ENCODE measurements at regions of chrX and their contacts with region 1.

Region 1: GRCh38 chrX:130770615-130771014 is 132.4 kb downstream of the ENOX2 start:
- DNase-seq: peak; percentile 61
- H3K4me3 ChIP-seq: no peak overlapping the region
- H3K27ac ChIP-seq: peak overlapping the region; percentile 41
- H3K4me1 ChIP-seq: peaks cover 11% of the 10 kb centered on the region
- H3K27me3 ChIP-seq: no peaks in the 10 kb centered on the region
- CTCF ChIP-seq: no peak
- POLR2A ChIP-seq: no peak

Region 2: DNA sequence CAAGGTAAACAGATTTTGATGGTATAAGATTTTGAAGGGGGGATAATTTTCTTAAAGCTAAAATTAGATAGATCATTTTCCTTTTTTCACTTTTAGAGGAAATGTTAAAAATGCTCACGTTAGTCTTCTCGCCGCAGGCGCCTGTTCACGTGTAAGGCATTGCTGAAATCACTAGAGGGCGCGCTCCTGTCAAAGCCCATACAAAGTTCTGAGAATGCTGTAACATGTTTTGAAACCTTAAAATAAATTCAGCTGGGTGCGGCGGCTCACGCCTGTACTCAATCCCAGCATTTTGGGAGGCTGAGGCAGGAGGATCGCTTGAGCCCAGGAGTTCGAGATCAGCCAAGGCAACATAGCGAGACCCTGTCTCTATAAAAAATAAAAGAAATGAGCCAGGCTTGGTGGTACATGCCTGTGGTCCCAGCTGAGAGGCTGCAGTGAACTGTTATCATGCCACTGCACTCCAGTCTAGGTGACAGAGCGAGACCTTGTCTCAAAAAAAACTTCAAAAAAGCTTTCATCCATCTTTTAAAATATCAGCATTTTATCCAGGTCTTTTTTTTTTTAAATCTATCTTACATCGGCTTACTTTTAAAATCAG is 230.8 kb before region 1 on chrX:
- CTCF ChIA-PET with region 1: no interaction called
- POLR2A ChIA-PET with region 1: no interaction called
- dilution Hi-C with region 1: no loop called
- intact Hi-C with region 1: no loop called
- DNase-seq: peak; percentile 31
- H3K4me3 ChIP-seq: no peak overlapping the region
- H3K27ac ChIP-seq: no peak overlapping the region
- H3K4me1 ChIP-seq: no peaks in the 10 kb centered on the region
- H3K27me3 ChIP-seq: no peaks in the 10 kb centered on the region
- CTCF ChIP-seq: peak; percentile 47 to 68
- POLR2A ChIP-seq: no peak

Region 3: GRCh38 chrX:130680164-130681035 is 90.2 kb before region 1 on chrX:
- CTCF ChIA-PET with region 1: no interaction called
- POLR2A ChIA-PET with region 1: no interaction called
- dilution Hi-C with region 1: no loop called
- intact Hi-C with region 1: no loop called
- DNase-seq: peak; percentile 13
- H3K4me3 ChIP-seq: no peak overlapping the region
- H3K27ac ChIP-seq: no peak overlapping the region
- H3K4me1 ChIP-seq: no peaks in the 10 kb centered on the region
- H3K27me3 ChIP-seq: no peaks in the 10 kb centered on the region
- CTCF ChIP-seq: no peak
- POLR2A ChIP-seq: no peak

Region 4: GRCh38 chrX:130902783-130903613 is 132.4 kb after region 1 on chrX and contains the start of gene ENOX2:
- CTCF ChIA-PET with region 1: no interaction called
- POLR2A ChIA-PET with region 1: no interaction called
- dilution Hi-C with region 1: no loop called
- intact Hi-C with region 1: loop called (anchors 1 kb)
- DNase-seq: peak; percentile 95
- H3K4me3 ChIP-seq: peak within 1 kb of the TSS; percentile 47 to 87 (median 68)
- H3K27ac ChIP-seq: peak within 1 kb of the TSS; percentile 46
- H3K4me1 ChIP-seq: peaks cover 2% of the 10 kb centered on the region
- H3K27me3 ChIP-seq: peaks cover 0 to 4% of the 10 kb centered on the region in 2 experiments
- CTCF ChIP-seq: no peak
- POLR2A ChIP-seq: peak; percentile 73
- total RNA-seq, gene ENOX2: 12.2 and 13.1 TPM in 2 replicates

Region 5: GRCh38 chrX:130952266-130953043 is 181.8 kb after region 1 on chrX:
- CTCF ChIA-PET with region 1: no interaction called
- POLR2A ChIA-PET with region 1: no interaction called
- dilution Hi-C with region 1: no loop called
- intact Hi-C with region 1: no loop called
- DNase-seq: no peak
- H3K4me3 ChIP-seq: no peak overlapping the region
- H3K27ac ChIP-seq: no peak overlapping the region
- H3K4me1 ChIP-seq: no peaks in the 10 kb centered on the region
- H3K27me3 ChIP-seq: no peaks in the 10 kb centered on the region
- CTCF ChIP-seq: no peak
- POLR2A ChIP-seq: no peak

Measured in endothelial cell of umbilical vein (primary cell).